Activated naive CD4-positive, alpha-beta T cell treated with anti-CD3 and anti-CD28 coated beads for 36 hours (primary cell): ENCODE measurements at regions of chr6 and their contacts with region 1.

Region 1: DNA sequence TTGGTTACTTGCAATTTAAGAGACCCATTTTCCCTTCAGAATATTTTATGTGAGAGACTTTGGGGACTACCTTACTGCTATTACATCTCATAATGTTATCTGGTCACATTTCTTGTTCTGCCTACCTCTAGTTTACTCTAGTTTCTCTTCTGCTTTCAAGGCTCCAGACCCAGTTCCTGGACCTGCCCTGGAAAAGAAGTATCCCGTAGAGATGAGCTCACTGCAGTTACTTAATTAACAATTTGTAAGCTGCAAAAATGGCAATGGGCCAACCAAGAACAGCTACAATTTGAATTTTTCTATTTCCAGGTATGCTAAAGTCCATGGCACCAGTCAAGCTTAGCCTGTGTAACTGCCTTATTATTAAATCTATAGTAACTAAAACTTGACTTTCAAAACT is 25.0 kb downstream of the TAB2 start:
- DNase-seq: no peak
- H3K4me3 Mint-ChIP-seq: no peak overlapping the region
- H3K27ac Mint-ChIP-seq: peak overlapping the region; percentile 84
- H3K4me1 Mint-ChIP-seq: peaks cover 70% of the 10 kb centered on the region
- H3K27me3 Mint-ChIP-seq: no peaks in the 10 kb centered on the region

Region 2: DNA sequence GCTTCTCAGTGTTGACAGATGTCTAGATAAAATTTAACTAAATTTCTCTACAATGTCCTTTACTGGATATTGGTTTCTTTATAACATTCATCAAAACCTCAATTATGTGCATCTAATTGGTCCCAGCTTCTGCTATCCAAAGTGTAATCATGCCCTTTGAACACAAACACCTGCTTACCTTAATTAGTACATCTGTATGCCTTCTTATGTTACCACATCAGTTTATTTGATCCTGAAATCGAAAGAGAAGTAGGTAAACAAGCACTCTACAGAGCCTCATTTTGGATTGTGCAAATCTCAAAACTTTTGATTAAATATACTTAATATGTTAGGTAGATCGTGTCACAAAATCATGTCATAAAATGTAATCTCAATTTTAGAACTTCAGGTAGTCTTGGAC is 11.5 kb after region 1 on chr6:
- CTCF ChIA-PET with region 1: interaction called, 7 read pairs
- intact Hi-C with region 1: loop called (anchors 1 kb)
- DNase-seq: no peak
- H3K4me3 Mint-ChIP-seq: no peak overlapping the region
- H3K27ac Mint-ChIP-seq: no peak overlapping the region
- H3K4me1 Mint-ChIP-seq: peaks cover 74% of the 10 kb centered on the region
- H3K27me3 Mint-ChIP-seq: no peaks in the 10 kb centered on the region